Ascending aorta (tissue), 2 donors: ENCODE measurements at regions of chr1 and their contacts with region 1.

Region 1: GRCh38 chr1:153677718-153678505 is 576 bp upstream of the NPR1 start:
- DNase-seq: peak in 1 of 2 donors; percentile 83
- H3K4me3 ChIP-seq: peak overlapping the region; percentile 81 to 92
- H3K27ac ChIP-seq: peak overlapping the region; percentile 88 to 96
- H3K4me1 ChIP-seq: peaks cover 0 to 7% of the 10 kb centered on the region in 2 donors
- H3K27me3 ChIP-seq: no peaks in the 10 kb centered on the region
- CTCF ChIP-seq: peak; percentile 90 to 94 (median 91)

Region 2: DNA sequence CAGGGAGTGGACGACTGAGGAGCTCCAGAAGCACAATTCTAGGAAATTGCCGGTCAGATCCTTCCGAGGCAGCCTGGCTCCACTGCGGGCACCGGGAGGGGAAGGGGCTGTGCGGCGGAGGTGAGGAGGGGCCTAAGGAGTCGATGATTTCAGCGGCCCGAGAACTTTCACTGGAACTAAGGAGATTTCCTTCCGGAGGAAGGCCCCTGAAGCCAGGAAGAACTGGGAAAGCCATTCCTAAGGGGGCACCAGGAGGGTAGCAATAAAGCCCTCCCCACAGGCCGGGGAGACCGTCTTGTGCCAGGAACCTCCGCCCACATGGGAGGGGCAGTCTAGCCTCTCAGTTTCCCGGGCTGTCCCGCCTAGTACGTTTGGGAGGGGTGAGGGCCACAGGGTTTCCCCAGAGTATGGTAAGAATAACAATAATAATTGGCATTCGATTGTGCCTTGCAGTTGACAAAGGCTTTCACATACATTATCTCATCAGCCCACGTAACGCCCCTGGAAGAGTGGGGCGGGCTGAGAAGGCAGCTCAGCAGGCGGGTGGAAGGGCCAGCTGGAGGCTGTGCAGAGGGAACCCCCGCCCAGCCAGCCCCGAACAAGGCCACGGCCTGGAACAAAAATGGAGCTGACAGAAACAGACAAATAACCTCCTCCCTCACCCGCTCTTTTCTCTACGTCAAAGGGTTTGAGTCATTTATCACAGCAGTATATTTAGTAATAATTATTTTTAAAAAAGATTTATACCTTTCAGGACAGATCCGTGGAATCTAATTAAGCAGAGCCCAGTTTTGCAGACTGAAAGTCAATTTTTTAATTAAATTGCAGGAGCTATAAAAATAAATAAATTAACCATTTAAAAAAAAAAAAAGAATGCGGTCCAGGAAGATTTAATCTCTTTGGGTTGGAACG is 20.4 kb after region 1 on chr1:
- intact Hi-C with region 1: loop called (anchors 2 kb)
- DNase-seq: peak; percentile 54 to 93
- H3K4me3 ChIP-seq: peak overlapping the region; percentile 33 to 38
- H3K27ac ChIP-seq: peak overlapping the region; percentile 99 to 100
- H3K4me1 ChIP-seq: peaks cover 16 to 33% of the 10 kb centered on the region in 2 donors
- H3K27me3 ChIP-seq: no peaks in the 10 kb centered on the region
- CTCF ChIP-seq: no peak

Region 3: DNA sequence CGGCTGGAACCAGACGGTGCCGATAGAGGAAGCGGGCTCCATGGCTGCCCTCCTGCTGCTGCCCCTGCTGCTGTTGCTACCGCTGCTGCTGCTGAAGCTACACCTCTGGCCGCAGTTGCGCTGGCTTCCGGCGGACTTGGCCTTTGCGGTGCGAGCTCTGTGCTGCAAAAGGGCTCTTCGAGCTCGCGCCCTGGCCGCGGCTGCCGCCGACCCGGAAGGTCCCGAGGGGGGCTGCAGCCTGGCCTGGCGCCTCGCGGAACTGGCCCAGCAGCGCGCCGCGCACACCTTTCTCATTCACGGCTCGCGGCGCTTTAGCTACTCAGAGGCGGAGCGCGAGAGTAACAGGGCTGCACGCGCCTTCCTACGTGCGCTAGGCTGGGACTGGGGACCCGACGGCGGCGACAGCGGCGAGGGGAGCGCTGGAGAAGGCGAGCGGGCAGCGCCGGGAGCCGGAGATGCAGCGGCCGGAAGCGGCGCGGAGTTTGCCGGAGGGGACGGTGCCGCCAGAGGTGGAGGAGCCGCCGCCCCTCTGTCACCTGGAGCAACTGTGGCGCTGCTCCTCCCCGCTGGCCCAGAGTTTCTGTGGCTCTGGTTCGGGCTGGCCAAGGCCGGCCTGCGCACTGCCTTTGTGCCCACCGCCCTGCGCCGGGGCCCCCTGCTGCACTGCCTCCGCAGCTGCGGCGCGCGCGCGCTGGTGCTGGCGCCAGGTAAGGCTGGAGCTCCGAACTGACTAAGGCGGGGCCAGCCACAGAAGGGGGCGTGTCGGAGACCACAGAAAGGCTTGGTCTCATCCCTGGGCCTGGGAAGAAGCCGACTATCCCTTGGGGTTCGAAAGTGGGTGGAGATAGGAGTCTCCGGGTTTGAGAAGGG is 97.8 kb after region 1 on chr1:
- intact Hi-C with region 1: loop called (anchors 1 kb)
- DNase-seq: peak in 1 of 2 donors; percentile 88
- H3K4me3 ChIP-seq: peak overlapping the region; percentile 78 to 85
- H3K27ac ChIP-seq: peak overlapping the region; percentile 92 to 93
- H3K4me1 ChIP-seq: peaks cover 22 to 60% of the 10 kb centered on the region in 2 donors
- H3K27me3 ChIP-seq: no peaks in the 10 kb centered on the region
- CTCF ChIP-seq: peak in 1 of 3 experiments; percentile 25